Ascending aorta (tissue), 2 donors: ENCODE measurements at regions of chr15 and their contacts with region 1.

Region 1: DNA sequence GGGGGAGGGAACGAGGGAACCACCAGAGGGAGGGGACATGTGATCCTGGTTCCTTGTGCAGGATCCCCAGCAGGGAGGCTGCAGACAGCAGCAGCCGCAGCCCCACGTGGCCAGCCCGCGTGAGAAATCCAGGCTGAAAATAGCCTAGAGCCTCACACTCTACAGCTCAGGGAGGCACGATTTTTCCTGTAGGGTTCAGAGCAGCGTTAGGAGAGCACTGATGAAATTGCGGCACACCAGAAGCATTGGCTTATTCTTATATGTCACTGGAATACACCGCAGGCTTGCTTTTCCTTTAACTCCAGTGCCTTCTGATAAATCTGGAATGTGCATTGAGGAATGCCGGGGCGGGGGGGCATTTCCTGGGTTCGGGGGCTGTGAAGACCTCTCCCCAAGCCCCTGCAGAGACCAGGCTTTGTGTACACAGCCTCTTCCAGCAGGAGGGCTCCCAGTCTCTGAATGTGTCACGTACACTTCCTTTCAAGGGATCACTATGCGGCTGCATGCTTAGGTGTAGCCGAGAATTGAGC is 193.0 kb downstream of the ATP10A start:
- DNase-seq: peak; percentile 63 to 87
- H3K4me3 ChIP-seq: peak overlapping the region; percentile 14 to 50
- H3K27ac ChIP-seq: peak overlapping the region; percentile 89 to 92
- H3K4me1 ChIP-seq: peaks cover 20 to 55% of the 10 kb centered on the region in 2 donors
- H3K27me3 ChIP-seq: no peaks in the 10 kb centered on the region
- CTCF ChIP-seq: peak in 1 of 3 experiments; percentile 13

Region 2: DNA sequence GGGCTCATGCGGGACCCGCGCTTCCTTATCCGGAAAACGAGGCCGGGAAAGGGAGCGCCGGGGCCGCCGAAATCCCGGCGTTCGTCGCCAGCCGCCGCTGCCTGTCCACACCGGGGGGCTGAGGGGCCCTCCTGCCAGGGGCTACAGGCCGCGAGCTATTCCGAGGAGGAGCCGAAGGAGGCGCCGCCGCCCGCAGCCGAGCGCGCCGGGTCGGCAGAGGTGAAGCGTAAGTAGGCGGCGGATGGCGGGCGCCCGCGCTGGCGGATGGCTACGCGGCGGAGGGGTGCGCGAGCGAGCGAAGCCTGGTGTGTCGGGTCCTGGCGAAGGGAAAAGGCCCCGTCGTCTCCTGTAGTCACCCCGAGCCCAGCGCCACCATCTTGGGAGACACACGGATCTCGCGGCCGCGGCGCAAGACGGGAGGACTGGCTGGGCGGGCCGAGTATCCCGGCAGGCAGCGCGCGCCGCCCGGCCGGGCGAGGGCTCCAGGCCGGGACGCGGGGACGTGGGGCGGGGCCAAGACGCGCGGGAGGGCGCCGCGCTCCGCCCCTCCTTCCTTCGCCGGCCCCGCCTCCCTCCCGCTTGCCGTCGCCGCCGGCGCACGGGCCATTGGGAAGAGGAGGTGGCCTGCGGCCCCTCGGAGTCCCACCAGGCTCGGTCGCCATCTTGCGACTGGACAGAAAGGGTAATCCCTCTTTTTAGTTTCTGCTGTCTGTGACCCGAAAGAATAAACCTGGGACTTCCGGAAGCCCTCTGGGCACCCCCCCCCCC is 231.3 kb before region 1 on chr15 and contains the start of gene UBE3A:
- intact Hi-C with region 1: loop called (anchors 10 kb)
- DNase-seq: peak; percentile 60 to 94
- H3K4me3 ChIP-seq: peak within 1 kb of the TSS; percentile 93 to 99
- H3K27ac ChIP-seq: peak within 1 kb of the TSS; percentile 98 to 100
- H3K4me1 ChIP-seq: peaks cover 0 to 32% of the 10 kb centered on the region in 2 donors
- H3K27me3 ChIP-seq: no peaks in the 10 kb centered on the region
- CTCF ChIP-seq: peak; percentile 8 to 43 (median 17)
- total RNA-seq, gene UBE3A: 34.1 TPM

Region 3: GRCh38 chr15:25600751-25601150 is 69.3 kb before region 1 on chr15:
- intact Hi-C with region 1: no loop called
- DNase-seq: no peak
- H3K4me3 ChIP-seq: no peak overlapping the region
- H3K27ac ChIP-seq: no peak overlapping the region
- H3K4me1 ChIP-seq: no peaks in the 10 kb centered on the region
- H3K27me3 ChIP-seq: no peaks in the 10 kb centered on the region
- CTCF ChIP-seq: no peak

Region 4: GRCh38 chr15:25693321-25694237 is 23.5 kb after region 1 on chr15:
- intact Hi-C with region 1: loop called (anchors 2 kb)
- DNase-seq: peak in 1 of 2 donors; percentile 73
- H3K4me3 ChIP-seq: no peak overlapping the region
- H3K27ac ChIP-seq: peak overlapping the region; percentile 47 to 59
- H3K4me1 ChIP-seq: peaks cover 0 to 20% of the 10 kb centered on the region in 2 donors
- H3K27me3 ChIP-seq: no peaks in the 10 kb centered on the region
- CTCF ChIP-seq: peak; percentile 50 to 68 (median 62)

Region 5: DNA sequence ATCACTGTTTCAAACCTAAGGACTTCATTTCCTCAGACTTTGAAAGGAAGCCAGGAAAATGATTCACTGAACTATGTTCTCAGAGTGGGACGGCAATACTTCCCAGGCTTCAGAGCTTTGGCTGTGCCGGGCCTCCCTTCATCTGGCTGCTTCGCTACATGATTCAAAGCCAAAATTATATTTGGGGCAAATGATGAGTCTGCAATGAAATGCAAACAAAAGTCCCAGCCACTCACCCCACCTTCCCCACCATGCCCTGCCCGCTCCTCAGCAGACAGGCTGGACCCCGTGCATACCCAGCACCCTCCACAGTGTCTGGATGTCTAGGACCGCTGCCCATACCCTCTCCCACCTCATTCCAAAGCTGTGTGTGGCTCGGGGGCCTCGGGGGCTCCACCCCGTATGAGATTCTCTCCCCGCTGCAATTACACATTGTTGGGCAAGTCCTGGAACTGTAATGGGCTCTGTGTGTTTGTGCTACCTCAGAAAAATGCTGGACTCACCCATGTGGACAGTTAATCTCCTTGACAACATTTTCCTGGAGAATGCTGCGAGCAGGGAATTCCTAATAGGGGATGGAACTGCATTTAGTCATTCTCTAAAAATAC is 160.9 kb after region 1 on chr15:
- intact Hi-C with region 1: loop called (anchors 2 kb)
- DNase-seq: peak; percentile 78 to 96
- H3K4me3 ChIP-seq: peak overlapping the region in 1 of 2 donors; percentile 1
- H3K27ac ChIP-seq: peak overlapping the region; percentile 95 to 98
- H3K4me1 ChIP-seq: peaks cover 15 to 29% of the 10 kb centered on the region in 2 donors
- H3K27me3 ChIP-seq: no peaks in the 10 kb centered on the region
- CTCF ChIP-seq: no peak